ENCODE measurements at regions of chr17 and their contacts with region 1.

Region 1: DNA sequence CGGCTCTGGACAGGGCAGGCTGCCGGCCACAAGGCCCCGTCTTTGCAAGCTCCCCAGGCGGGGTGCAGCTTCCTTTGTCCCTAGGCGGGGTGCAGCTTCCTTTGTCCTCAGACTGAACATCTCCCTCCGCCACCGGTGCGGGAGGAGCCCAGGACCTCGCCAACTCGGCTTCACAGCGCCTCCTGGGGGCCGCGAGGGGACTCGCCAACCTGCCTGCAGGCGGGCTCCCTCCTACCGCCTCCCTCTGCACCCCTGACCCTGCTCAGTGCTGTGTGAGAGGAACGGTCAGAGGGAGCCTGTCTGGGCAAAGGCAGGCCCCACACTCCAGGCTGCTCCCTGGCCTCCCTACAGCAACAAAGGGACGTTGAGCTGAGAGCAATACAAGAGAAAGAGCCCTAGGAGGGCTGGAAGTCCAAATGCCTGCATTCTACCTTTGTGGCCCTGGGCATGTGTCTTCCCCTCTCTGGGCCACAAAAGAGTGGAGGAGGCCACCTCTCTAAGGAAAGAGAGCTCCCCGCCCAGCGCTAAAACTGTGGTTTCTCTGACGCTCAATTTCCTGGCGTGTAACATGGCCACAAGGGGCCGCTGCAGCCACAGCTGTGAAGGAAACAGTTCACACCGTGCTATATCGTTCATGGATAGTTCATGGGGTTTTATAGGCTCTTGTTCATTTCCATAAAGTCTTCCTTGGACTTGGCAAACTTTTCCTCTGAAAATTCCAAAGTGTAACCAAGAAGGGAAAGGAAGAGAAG is 20.9 kb upstream of the KRT19 start:
- DNase-seq: peak; percentile 78
- ATAC-seq: peak; percentile 80
- H3K4me3 ChIP-seq: peak overlapping the region in 2 of 5 experiments; percentile 5 to 15
- H3K4me3 Mint-ChIP-seq: peak overlapping the region; percentile 37
- H3K27ac ChIP-seq: no peak overlapping the region
- H3K27ac Mint-ChIP-seq: no peak overlapping the region
- H3K4me1 ChIP-seq: peaks cover 8 to 13% of the 10 kb centered on the region in 2 donors
- H3K4me1 Mint-ChIP-seq: peaks cover 8% of the 10 kb centered on the region
- H3K27me3 ChIP-seq: peaks cover 0 to 42% (median 7%) of the 10 kb centered on the region in 4 experiments
- H3K27me3 Mint-ChIP-seq: peaks cover 53% of the 10 kb centered on the region
- CTCF ChIP-seq: peak; percentile 93

Region 2: GRCh38 chr17:40857535-40857934 is 691.5 kb before region 1 on chr17:
- CTCF ChIA-PET with region 1: interaction called, 15 read pairs
- POLR2A ChIA-PET with region 1: no interaction called
- intact Hi-C with region 1: no loop called
- DNase-seq: no peak
- ATAC-seq: no peak
- H3K4me3 ChIP-seq: no peak overlapping the region
- H3K4me3 Mint-ChIP-seq: no peak overlapping the region
- H3K27ac ChIP-seq: no peak overlapping the region
- H3K27ac Mint-ChIP-seq: no peak overlapping the region
- H3K4me1 ChIP-seq: no peaks in the 10 kb centered on the region
- H3K4me1 Mint-ChIP-seq: no peaks in the 10 kb centered on the region
- H3K27me3 ChIP-seq: peaks cover 0 to 8% (median 0%) of the 10 kb centered on the region in 4 experiments
- H3K27me3 Mint-ChIP-seq: peaks cover 48% of the 10 kb centered on the region
- CTCF ChIP-seq: no peak

Region 3: GRCh38 chr17:40909351-40909750 is 639.7 kb before region 1 on chr17:
- CTCF ChIA-PET with region 1: interaction called, 44 read pairs
- POLR2A ChIA-PET with region 1: no interaction called
- intact Hi-C with region 1: loop called (anchors 1 kb)
- DNase-seq: peak; percentile 78
- ATAC-seq: peak; percentile 70
- H3K4me3 ChIP-seq: no peak overlapping the region
- H3K4me3 Mint-ChIP-seq: no peak overlapping the region
- H3K27ac ChIP-seq: no peak overlapping the region
- H3K27ac Mint-ChIP-seq: no peak overlapping the region
- H3K4me1 ChIP-seq: no peaks in the 10 kb centered on the region
- H3K4me1 Mint-ChIP-seq: no peaks in the 10 kb centered on the region
- H3K27me3 ChIP-seq: peaks cover 0 to 17% (median 5%) of the 10 kb centered on the region in 4 experiments
- H3K27me3 Mint-ChIP-seq: peaks cover 49% of the 10 kb centered on the region
- CTCF ChIP-seq: peak; percentile 76

Region 4: GRCh38 chr17:41559548-41559947 is 10.5 kb after region 1 on chr17:
- CTCF ChIA-PET with region 1: interaction called, 20 read pairs
- POLR2A ChIA-PET with region 1: no interaction called
- intact Hi-C with region 1: no loop called
- DNase-seq: no peak
- ATAC-seq: no peak
- H3K4me3 ChIP-seq: no peak overlapping the region
- H3K4me3 Mint-ChIP-seq: no peak overlapping the region
- H3K27ac ChIP-seq: no peak overlapping the region
- H3K27ac Mint-ChIP-seq: no peak overlapping the region
- H3K4me1 ChIP-seq: no peaks in the 10 kb centered on the region
- H3K4me1 Mint-ChIP-seq: no peaks in the 10 kb centered on the region
- H3K27me3 ChIP-seq: peaks cover 0 to 25% (median 10%) of the 10 kb centered on the region in 4 experiments
- H3K27me3 Mint-ChIP-seq: peaks cover 61% of the 10 kb centered on the region
- CTCF ChIP-seq: no peak

Measured in B cell (primary cell).